Heart left ventricle (tissue), 16 donors: ENCODE measurements at regions of chr13 and their contacts with region 1.

Region 1: GRCh38 chr13:98542568-98543377 is 34.1 kb downstream of the STK24 start:
- DNase-seq: no peak
- ATAC-seq: peak in 3 of 4 donors; percentile 9 to 16 (median 15)
- H3K4me3 ChIP-seq: peak overlapping the region in 9 of 12 donors; percentile 1 to 42 (median 29)
- H3K27ac ChIP-seq: peak overlapping the region in 10 of 12 donors; percentile 21 to 74 (median 49)
- H3K4me1 ChIP-seq: peaks cover 6 to 92% (median 63%) of the 10 kb centered on the region in 12 donors
- H3K27me3 ChIP-seq: no peaks in the 10 kb centered on the region
- CTCF ChIP-seq: no peak
- POLR2A ChIP-seq: no peak

Region 2: DNA sequence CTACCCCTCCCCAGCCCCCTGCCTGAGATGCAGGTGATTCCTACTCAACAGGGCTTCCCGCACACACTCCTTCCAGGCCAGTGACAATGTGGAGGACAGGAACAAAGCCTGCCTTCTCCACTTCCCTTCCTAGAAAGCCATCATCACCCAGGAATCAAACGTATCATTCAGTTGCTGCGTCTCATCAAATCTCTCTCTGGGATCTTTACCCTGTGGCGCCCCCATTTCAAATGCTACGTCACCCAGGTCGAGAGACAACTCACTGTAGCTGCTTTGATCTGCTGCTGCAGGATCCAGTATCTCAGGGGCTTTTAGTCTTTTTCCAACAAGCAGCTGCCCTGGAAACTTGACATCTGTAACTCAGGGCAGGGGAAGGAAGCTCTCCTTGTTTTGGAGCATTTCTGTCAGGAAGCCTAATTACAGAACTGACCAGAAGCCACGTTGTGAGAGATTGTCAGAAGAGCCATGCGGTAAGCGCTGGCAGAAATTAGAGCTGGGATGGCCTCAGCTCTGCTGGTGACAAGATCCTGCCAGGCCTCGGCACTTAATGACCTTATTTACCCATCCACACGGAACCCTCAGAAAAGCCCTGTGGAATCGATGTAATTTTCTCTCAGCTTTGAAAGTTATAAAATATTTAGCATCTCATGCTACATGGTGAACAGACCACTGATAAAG is 106.4 kb before region 1 on chr13:
- intact Hi-C with region 1: no loop called
- DNase-seq: no peak
- ATAC-seq: no peak
- H3K4me3 ChIP-seq: no peak overlapping the region
- H3K27ac ChIP-seq: no peak overlapping the region
- H3K4me1 ChIP-seq: no peaks in the 10 kb centered on the region
- H3K27me3 ChIP-seq: no peaks in the 10 kb centered on the region
- CTCF ChIP-seq: no peak
- POLR2A ChIP-seq: no peak

Region 3: DNA sequence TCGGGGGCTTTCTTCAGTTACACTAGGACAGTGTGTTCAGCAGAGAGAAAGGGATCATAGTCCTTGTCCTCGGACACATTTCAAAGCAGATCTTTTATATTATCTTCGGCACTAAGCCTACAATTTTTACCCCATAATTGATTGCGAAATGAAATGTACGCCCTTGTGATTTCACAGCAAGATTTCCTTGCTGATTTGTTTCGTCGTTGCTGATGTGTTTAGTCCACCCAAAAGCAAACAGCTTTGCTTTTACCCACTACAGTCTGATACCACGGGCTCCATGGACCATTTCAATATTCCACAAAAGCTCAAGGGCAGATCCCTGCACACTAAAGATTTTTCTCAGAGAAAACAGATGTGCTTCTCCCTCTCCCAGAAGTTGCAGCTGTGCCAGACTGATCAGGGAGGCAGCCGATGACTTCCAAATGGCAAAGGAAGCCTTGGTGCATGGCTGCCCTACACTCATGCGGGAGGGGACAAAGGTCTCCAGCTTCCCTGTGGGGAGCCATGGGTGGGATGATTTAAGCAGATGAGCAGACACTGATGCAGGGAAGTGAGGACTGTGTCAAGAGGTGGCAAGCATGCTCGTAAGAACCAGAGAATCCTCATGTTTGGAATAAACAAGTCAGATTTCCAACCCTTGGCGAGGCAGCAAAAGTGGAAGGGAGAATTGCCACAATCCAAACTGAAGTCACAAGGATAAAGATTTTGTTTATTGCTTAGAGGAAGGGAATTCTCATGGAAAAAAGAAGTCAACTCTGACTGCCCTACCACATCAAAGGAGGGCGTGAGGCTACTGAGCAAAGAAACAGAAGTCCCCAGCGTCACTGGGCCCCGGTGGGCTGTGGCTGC is 46.9 kb before region 1 on chr13:
- intact Hi-C with region 1: loop called in 1 of 10 experiments (anchors 5 kb)
- DNase-seq: no peak
- ATAC-seq: peak; percentile 32 to 58 (median 43)
- H3K4me3 ChIP-seq: peak overlapping the region in 3 of 12 donors; percentile 2 to 20 (median 20)
- H3K27ac ChIP-seq: peak overlapping the region in 9 of 12 donors; percentile 6 to 85 (median 50)
- H3K4me1 ChIP-seq: peaks cover 0 to 53% (median 31%) of the 10 kb centered on the region in 12 donors
- H3K27me3 ChIP-seq: no peaks in the 10 kb centered on the region
- CTCF ChIP-seq: no peak
- POLR2A ChIP-seq: no peak

Region 4: GRCh38 chr13:98641075-98641474 is 98.3 kb after region 1 on chr13:
- intact Hi-C with region 1: no loop called
- DNase-seq: no peak
- ATAC-seq: no peak
- H3K4me3 ChIP-seq: no peak overlapping the region
- H3K27ac ChIP-seq: no peak overlapping the region
- H3K4me1 ChIP-seq: no peaks in the 10 kb centered on the region
- H3K27me3 ChIP-seq: peaks cover 0 to 6% (median 0%) of the 10 kb centered on the region in 9 donors
- CTCF ChIP-seq: no peak
- POLR2A ChIP-seq: no peak

Region 5: DNA sequence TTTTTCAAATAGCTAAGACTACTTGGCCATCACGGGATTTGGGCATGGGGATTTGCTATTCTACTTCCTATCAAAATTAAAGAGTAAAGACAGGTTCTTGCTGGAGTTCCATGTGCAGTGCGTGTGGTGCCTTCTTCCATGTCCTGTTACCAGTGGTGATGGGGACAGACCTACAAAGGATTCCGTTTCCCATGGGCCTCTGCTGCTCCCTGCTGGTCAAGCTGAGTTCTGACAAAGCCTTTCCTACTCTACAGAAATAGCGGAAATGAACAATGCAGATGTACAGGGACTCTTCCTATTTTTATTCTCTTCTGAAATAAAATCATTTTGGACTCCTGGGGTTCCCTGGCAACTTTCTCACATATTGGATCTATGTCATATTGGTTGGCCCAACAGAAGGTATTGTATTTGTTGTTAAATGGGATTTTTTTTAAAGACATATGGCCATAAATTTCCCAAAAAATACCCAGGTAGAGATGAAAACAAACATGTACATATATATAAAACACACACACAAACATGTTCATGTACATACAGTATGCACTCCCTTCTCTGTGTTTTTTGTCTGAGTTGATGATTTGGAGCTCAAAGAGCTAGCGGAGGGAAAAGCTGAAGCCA is 300.2 kb after region 1 on chr13:
- intact Hi-C with region 1: no loop called
- DNase-seq: peak; percentile 65 to 82 (median 72)
- ATAC-seq: peak; percentile 75 to 87 (median 84)
- H3K4me3 ChIP-seq: no peak overlapping the region
- H3K27ac ChIP-seq: no peak overlapping the region
- H3K4me1 ChIP-seq: peaks cover 0 to 14% (median 0%) of the 10 kb centered on the region in 12 donors
- H3K27me3 ChIP-seq: no peaks in the 10 kb centered on the region
- CTCF ChIP-seq: peak; percentile 79 to 90 (median 83)
- POLR2A ChIP-seq: no peak